IMR-90 (cell line): ENCODE measurements at regions of chr7 and their contacts with region 1.

Region 1: GRCh38 chr7:144057972-144058371 is 9.2 kb downstream of the OR2A5 start:
- DNase-seq: no peak
- ATAC-seq: peak; percentile 24; the same call in 1 of the 2 replicates
- H3K4me3 ChIP-seq: no peak overlapping the region
- H3K27ac ChIP-seq: no peak overlapping the region
- H3K4me1 ChIP-seq: no peaks in the 10 kb centered on the region
- H3K27me3 ChIP-seq: no peaks in the 10 kb centered on the region
- CTCF ChIP-seq: no peak
- POLR2A ChIP-seq: no peak
- RAD21 ChIP-seq: no peak

Region 2: GRCh38 chr7:143958781-143959180 is 99.2 kb before region 1 on chr7:
- CTCF ChIA-PET with region 1: no interaction called
- POLR2A ChIA-PET with region 1: no interaction called
- dilution Hi-C with region 1: no loop called
- in situ Hi-C with region 1: no loop called
- intact Hi-C with region 1: no loop called
- DNase-seq: peak; percentile 39
- ATAC-seq: no peak; the same call in 1 of the 2 replicates
- H3K4me3 ChIP-seq: no peak overlapping the region
- H3K27ac ChIP-seq: no peak overlapping the region
- H3K4me1 ChIP-seq: peaks cover 3% of the 10 kb centered on the region; the same call in 1 of the 2 replicates
- H3K27me3 ChIP-seq: peaks cover 3% of the 10 kb centered on the region; the same call in 1 of the 2 replicates
- CTCF ChIP-seq: no peak
- POLR2A ChIP-seq: no peak
- RAD21 ChIP-seq: no peak

Region 3: DNA sequence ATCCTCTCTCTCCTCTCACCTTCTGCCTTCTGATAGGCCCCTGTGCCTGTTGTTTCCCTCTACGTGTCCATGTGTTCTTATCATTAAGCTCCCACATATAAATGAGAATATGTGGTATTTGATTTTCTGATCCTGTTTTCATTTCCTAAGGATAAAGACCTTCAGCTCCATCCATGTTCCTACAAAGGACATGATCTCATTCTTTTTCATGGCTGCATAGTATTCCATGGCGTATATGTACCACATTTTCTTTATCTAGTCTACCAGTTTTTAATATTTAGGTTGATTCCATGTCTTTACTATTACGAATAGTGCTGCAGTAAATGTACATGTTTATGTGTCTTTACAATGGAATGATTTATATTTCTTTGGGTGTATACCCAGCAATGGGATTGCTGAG is 32.7 kb after region 1 on chr7:
- CTCF ChIA-PET with region 1: no interaction called
- POLR2A ChIA-PET with region 1: no interaction called
- dilution Hi-C with region 1: no loop called
- in situ Hi-C with region 1: no loop called
- intact Hi-C with region 1: loop called (anchors 5 kb)
- DNase-seq: no peak
- ATAC-seq: no peak
- H3K4me3 ChIP-seq: no peak overlapping the region
- H3K27ac ChIP-seq: no peak overlapping the region
- H3K4me1 ChIP-seq: no peaks in the 10 kb centered on the region
- H3K27me3 ChIP-seq: no peaks in the 10 kb centered on the region
- CTCF ChIP-seq: no peak
- POLR2A ChIP-seq: no peak
- RAD21 ChIP-seq: no peak

Region 4: GRCh38 chr7:144164784-144165183 is 106.8 kb after region 1 on chr7:
- CTCF ChIA-PET with region 1: no interaction called
- POLR2A ChIA-PET with region 1: no interaction called
- dilution Hi-C with region 1: no loop called
- in situ Hi-C with region 1: no loop called
- intact Hi-C with region 1: no loop called
- DNase-seq: no peak
- ATAC-seq: no peak
- H3K4me3 ChIP-seq: no peak overlapping the region
- H3K27ac ChIP-seq: no peak overlapping the region
- H3K4me1 ChIP-seq: no peaks in the 10 kb centered on the region
- H3K27me3 ChIP-seq: no peaks in the 10 kb centered on the region
- CTCF ChIP-seq: no peak
- POLR2A ChIP-seq: no peak
- RAD21 ChIP-seq: no peak